Calu3 (cell line): ENCODE measurements at regions of chr3 and their contacts with region 1.

Region 1: DNA sequence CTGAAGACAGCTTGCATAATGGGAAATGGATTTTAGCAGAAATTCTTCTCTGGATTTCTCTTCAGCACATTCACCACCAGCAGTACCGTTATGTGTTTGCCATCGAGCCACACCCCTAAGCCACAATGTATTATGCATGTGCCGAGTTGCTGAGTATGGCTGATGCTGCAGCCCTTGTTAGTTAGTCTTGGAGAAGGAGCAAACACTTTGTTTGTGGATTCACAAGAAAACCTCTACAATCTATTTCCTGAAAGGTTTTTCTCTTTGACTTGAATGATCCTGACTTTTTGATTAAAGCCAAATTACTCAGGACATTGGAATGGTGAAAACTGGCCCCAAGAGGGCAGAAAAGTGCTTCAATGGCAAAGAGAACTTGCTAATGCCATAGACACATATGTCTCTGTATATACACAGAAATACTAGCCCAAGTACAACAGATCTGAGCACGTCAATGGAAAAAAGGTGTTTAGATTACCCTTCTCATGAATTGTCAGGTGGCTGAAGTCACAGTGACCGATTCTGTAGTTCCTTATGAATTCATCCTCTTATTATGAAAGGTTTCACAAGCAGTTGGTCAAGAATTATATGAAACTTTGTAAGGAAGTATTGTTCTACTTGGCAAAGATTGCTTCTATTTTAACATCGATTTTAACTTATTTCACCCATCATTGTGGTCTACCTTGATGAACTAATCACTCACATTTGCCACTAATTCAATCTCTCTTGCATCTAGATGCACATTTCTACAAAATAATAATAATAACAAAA is 103.0 kb downstream of the P3H2 start:
- DNase-seq: peak; percentile 61
- H3K4me3 Mint-ChIP-seq: no peak overlapping the region
- H3K27ac Mint-ChIP-seq: no peak overlapping the region
- H3K4me1 Mint-ChIP-seq: peaks cover 30% of the 10 kb centered on the region
- H3K27me3 Mint-ChIP-seq: no peaks in the 10 kb centered on the region
- CTCF ChIP-seq: peak; percentile 31

Region 2: GRCh38 chr3:189685854-189686253 is 331.9 kb before region 1 on chr3:
- CTCF ChIA-PET with region 1: no interaction called
- intact Hi-C with region 1: no loop called
- DNase-seq: no peak
- H3K4me3 Mint-ChIP-seq: no peak overlapping the region
- H3K27ac Mint-ChIP-seq: no peak overlapping the region
- H3K4me1 Mint-ChIP-seq: no peaks in the 10 kb centered on the region
- H3K27me3 Mint-ChIP-seq: no peaks in the 10 kb centered on the region
- CTCF ChIP-seq: no peak

Region 3: GRCh38 chr3:189967254-189967865 is 50.3 kb before region 1 on chr3:
- CTCF ChIA-PET with region 1: interaction called, 7 read pairs
- intact Hi-C with region 1: loop called (anchors 2 kb)
- DNase-seq: peak; percentile 69
- H3K4me3 Mint-ChIP-seq: no peak overlapping the region
- H3K27ac Mint-ChIP-seq: no peak overlapping the region
- H3K4me1 Mint-ChIP-seq: no peaks in the 10 kb centered on the region
- H3K27me3 Mint-ChIP-seq: no peaks in the 10 kb centered on the region
- CTCF ChIP-seq: peak; percentile 89

Region 4: GRCh38 chr3:190120269-190121060 is 102.8 kb after region 1 on chr3 and contains the start of gene P3H2:
- CTCF ChIA-PET with region 1: interaction called, 8 read pairs
- intact Hi-C with region 1: loop called (anchors 1 kb)
- DNase-seq: peak; percentile 94
- H3K4me3 Mint-ChIP-seq: peak within 1 kb of the TSS; percentile 63
- H3K27ac Mint-ChIP-seq: peak within 1 kb of the TSS; percentile 13
- H3K4me1 Mint-ChIP-seq: peaks cover 88% of the 10 kb centered on the region
- H3K27me3 Mint-ChIP-seq: peaks cover 21% of the 10 kb centered on the region
- CTCF ChIP-seq: peak; percentile 7
- total RNA-seq, gene P3H2: 5.9 and 7.1 TPM in 2 replicates

Region 5: GRCh38 chr3:190205739-190206138 is 188.0 kb after region 1 on chr3:
- CTCF ChIA-PET with region 1: interaction called, 3 read pairs
- intact Hi-C with region 1: loop called (anchors 1 kb)
- DNase-seq: no peak
- H3K4me3 Mint-ChIP-seq: no peak overlapping the region
- H3K27ac Mint-ChIP-seq: no peak overlapping the region
- H3K4me1 Mint-ChIP-seq: no peaks in the 10 kb centered on the region
- H3K27me3 Mint-ChIP-seq: no peaks in the 10 kb centered on the region
- CTCF ChIP-seq: no peak

Region 6: DNA sequence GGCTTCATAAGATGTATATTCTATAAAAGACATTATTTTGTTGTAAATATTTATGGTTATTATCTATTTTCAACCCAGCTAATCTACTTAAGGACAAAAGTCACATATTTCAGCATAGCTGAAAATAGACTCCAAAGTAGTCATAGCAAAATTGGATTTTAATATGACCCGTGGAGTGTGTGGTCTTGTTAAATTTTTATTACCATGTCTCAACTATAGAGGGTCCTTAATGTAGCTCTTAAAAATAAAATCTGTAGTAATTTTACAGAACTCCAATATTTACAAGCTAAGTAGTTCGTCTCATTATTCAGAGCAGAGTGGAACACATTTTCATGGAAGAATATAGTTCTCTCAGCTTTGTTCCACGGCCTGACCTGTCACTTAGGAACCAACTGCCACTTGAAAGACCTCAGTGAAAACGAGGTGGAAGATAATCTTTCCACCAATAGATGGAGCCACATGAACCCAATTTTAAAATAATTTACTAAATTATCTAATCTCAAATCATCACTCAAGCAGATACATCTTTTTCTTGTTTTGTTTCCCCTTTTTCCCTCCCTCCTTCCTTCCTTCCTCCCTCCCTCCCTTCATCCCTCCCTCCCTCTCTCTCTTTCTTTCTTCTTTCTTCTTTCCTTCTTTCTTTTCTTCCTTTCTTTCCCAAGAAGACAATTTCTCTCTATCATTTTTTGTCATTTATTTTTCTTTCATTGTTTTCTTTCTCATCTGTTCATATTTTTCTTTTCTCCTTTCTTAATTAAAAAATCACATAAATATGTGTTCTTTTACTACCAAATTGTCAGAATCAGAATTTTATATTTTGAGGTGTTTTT is 207.4 kb after region 1 on chr3:
- CTCF ChIA-PET with region 1: no interaction called
- intact Hi-C with region 1: no loop called
- DNase-seq: peak; percentile 37
- H3K4me3 Mint-ChIP-seq: no peak overlapping the region
- H3K27ac Mint-ChIP-seq: no peak overlapping the region
- H3K4me1 Mint-ChIP-seq: peaks cover 7% of the 10 kb centered on the region
- H3K27me3 Mint-ChIP-seq: no peaks in the 10 kb centered on the region
- CTCF ChIP-seq: peak; percentile 58